Vagina (tissue), 2 donors: ENCODE measurements at regions of chr4 and their contacts with region 1.

Region 1: DNA sequence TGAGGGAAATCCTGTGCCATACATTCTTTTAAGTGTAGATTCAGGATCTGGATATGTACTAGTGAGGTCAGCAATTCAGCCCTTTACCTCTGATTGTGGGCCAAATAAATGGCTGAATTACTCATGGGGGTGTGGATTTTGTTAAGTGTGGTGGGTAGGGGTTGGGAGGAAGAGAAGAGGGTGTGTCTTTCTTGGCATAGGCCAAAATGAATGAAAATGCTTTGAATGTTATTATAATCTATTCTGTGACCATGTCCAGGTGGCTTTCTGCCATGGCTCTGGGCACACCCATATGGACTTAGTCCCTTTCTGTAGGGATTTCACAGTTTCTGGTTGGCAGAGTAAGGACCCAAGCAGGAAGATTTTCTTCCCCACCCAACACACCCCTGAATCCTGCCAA is 244.3 kb downstream of the CBR4 start:
- DNase-seq: no peak
- H3K4me3 ChIP-seq: no peak overlapping the region
- H3K27ac ChIP-seq: peak overlapping the region; percentile 68
- H3K4me1 ChIP-seq: peaks cover 40% of the 10 kb centered on the region
- H3K27me3 ChIP-seq: no peaks in the 10 kb centered on the region
- CTCF ChIP-seq: no peak
- POLR2A ChIP-seq: no peak

Region 2: GRCh38 chr4:168353746-168354145 is 412.0 kb before region 1 on chr4:
- intact Hi-C with region 1: no loop called
- DNase-seq: no peak
- H3K4me3 ChIP-seq: no peak overlapping the region
- H3K27ac ChIP-seq: no peak overlapping the region
- H3K4me1 ChIP-seq: no peaks in the 10 kb centered on the region
- H3K27me3 ChIP-seq: no peaks in the 10 kb centered on the region
- CTCF ChIP-seq: no peak
- POLR2A ChIP-seq: no peak

Region 3: GRCh38 chr4:168815379-168816345 is 49.9 kb after region 1 on chr4:
- intact Hi-C with region 1: loop called (anchors 10 kb)
- DNase-seq: no peak
- H3K4me3 ChIP-seq: peak overlapping the region in 1 of 2 donors; percentile 5
- H3K27ac ChIP-seq: peak overlapping the region; percentile 79
- H3K4me1 ChIP-seq: peaks cover 34% of the 10 kb centered on the region
- H3K27me3 ChIP-seq: no peaks in the 10 kb centered on the region
- CTCF ChIP-seq: no peak
- POLR2A ChIP-seq: no peak

Region 4: GRCh38 chr4:169582205-169582604 is 816.5 kb after region 1 on chr4:
- intact Hi-C with region 1: no loop called
- DNase-seq: no peak
- H3K4me3 ChIP-seq: no peak overlapping the region
- H3K27ac ChIP-seq: no peak overlapping the region
- H3K4me1 ChIP-seq: no peaks in the 10 kb centered on the region
- H3K27me3 ChIP-seq: no peaks in the 10 kb centered on the region
- CTCF ChIP-seq: no peak
- POLR2A ChIP-seq: no peak